Mammary epithelial cell (primary cell): ENCODE measurements at regions of chr1 and their contacts with region 1.

Region 1: GRCh38 chr1:32876341-32877210 is 5.9 kb upstream of the FNDC5 start:
- DNase-seq: no peak
- H3K4me3 ChIP-seq: no peak overlapping the region
- H3K27ac ChIP-seq: no peak overlapping the region
- H3K4me1 ChIP-seq: peaks cover 3% of the 10 kb centered on the region
- H3K27me3 ChIP-seq: peaks cover 1% of the 10 kb centered on the region
- CTCF ChIP-seq: peak; percentile 87 to 92

Region 2: GRCh38 chr1:32939655-32940371 is 63.2 kb after region 1 on chr1:
- CTCF ChIA-PET with region 1: no interaction called
- dilution Hi-C with region 1: loop called (anchors 5 kb)
- in situ Hi-C with region 1: no loop called
- intact Hi-C with region 1: no loop called
- DNase-seq: peak; percentile 94
- H3K4me3 ChIP-seq: no peak overlapping the region
- H3K27ac ChIP-seq: peak overlapping the region; percentile 63
- H3K4me1 ChIP-seq: peaks cover 30% of the 10 kb centered on the region
- H3K27me3 ChIP-seq: no peaks in the 10 kb centered on the region
- CTCF ChIP-seq: no peak

Region 3: GRCh38 chr1:33086384-33086850 is 209.8 kb after region 1 on chr1:
- CTCF ChIA-PET with region 1: no interaction called
- dilution Hi-C with region 1: loop called (anchors 5 kb)
- in situ Hi-C with region 1: loop called in 1 of 2 experiments (anchors 10 kb)
- intact Hi-C with region 1: loop called (anchors 1 kb)
- DNase-seq: peak; percentile 51
- H3K4me3 ChIP-seq: no peak overlapping the region
- H3K27ac ChIP-seq: no peak overlapping the region
- H3K4me1 ChIP-seq: peaks cover 7% of the 10 kb centered on the region
- H3K27me3 ChIP-seq: no peaks in the 10 kb centered on the region
- CTCF ChIP-seq: peak; percentile 75 to 89

Region 4: DNA sequence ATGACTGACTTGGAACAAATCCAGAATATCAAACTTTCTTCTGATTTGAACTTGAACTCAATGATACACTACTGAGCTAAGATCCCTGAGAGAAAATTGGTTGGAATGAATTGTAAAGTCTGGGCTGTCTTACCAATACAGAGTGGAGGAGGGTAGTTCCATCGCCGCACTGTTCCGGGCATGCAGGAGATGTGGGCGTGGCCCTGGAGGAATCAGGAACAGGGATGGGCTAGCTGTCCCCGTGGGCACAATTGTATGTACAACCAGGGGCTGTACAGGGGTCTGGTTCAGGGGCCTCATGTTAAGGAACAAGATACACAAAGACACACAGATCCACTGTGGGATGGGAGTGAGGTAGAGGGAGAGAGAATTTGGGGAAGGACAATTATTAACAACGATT is 740.2 kb after region 1 on chr1:
- CTCF ChIA-PET with region 1: no interaction called
- dilution Hi-C with region 1: no loop called
- in situ Hi-C with region 1: no loop called
- intact Hi-C with region 1: loop called (anchors 10 kb)
- DNase-seq: no peak
- H3K4me3 ChIP-seq: no peak overlapping the region
- H3K27ac ChIP-seq: no peak overlapping the region
- H3K4me1 ChIP-seq: no peaks in the 10 kb centered on the region
- H3K27me3 ChIP-seq: no peaks in the 10 kb centered on the region
- CTCF ChIP-seq: no peak